Activated CD4-positive, alpha-beta memory T cell treated with anti-CD3 and anti-CD28 coated beads, Interleukin-2, amount 10 ng/mL, durations not matched to agents 7 days and 5 days (primary cell): ENCODE measurements at regions of chr10 and their contacts with region 1.

Region 1: GRCh38 chr10:102225646-102226541 is at the start of gene ELOVL3:
- DNase-seq: peak; percentile 90
- H3K4me3 Mint-ChIP-seq: peak within 1 kb of the TSS; percentile 63
- H3K27ac Mint-ChIP-seq: peak within 1 kb of the TSS; percentile 44
- H3K4me1 Mint-ChIP-seq: peaks cover 26% of the 10 kb centered on the region
- H3K27me3 Mint-ChIP-seq: peaks cover 67% of the 10 kb centered on the region
- total RNA-seq, gene ELOVL3: not detected

Region 2: GRCh38 chr10:102150970-102151773 is 74.7 kb before region 1 on chr10:
- CTCF ChIA-PET with region 1: no interaction called
- POLR2A ChIA-PET with region 1: no interaction called
- DNase-seq: no peak
- H3K4me3 Mint-ChIP-seq: peak overlapping the region; percentile 90
- H3K27ac Mint-ChIP-seq: peak overlapping the region; percentile 87
- H3K4me1 Mint-ChIP-seq: peaks cover 47% of the 10 kb centered on the region
- H3K27me3 Mint-ChIP-seq: no peaks in the 10 kb centered on the region

Region 3: DNA sequence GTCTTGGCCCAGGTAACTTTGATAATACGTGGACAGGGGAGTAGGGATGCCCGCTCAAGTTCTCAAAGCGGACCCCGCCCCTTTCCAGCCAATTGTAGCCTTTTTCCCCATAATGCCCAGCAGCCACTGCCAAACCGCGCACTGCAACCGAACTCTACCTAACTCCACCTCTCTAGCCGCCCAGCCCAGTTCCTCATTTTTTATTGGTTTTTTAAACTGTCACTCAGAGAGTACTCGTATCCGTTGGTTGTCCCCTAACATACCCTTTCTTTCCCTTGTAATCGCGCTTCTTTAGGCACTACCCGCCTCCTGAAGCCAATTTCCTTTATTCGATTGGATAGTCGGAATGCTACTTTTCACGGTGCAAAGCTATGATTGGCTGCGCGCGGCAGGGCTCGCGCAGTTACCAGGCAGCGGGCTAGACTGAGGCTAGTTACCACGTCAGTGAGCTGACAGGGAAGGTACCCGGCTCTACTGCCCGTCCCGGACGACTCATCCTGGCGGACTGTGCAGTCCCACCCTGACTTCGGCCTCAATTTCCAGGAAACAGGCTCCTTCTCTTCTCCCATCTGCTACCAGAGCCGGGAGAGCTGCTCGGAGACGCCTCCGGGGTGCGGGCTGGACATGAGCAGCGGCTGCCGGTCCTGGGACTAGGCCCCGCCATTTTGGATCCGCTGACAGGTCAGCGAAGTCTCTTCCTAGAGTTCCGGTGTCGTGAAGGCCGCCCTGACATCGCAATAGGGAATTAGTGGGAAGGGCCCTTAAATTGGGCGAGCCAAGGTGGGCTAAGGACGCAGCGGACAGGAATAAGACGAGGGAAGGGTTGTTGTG is 19.4 kb after region 1 on chr10 and contains the start of gene GBF1:
- CTCF ChIA-PET with region 1: interaction called, 105 read pairs
- POLR2A ChIA-PET with region 1: interaction called, 11 read pairs
- DNase-seq: peak; percentile 94
- H3K4me3 Mint-ChIP-seq: peak within 1 kb of the TSS; percentile 99
- H3K27ac Mint-ChIP-seq: peak within 1 kb of the TSS; percentile 89
- H3K4me1 Mint-ChIP-seq: peaks cover 57% of the 10 kb centered on the region
- H3K27me3 Mint-ChIP-seq: peaks cover 14% of the 10 kb centered on the region
- total RNA-seq, gene GBF1: 42.4 to 43.1 TPM

Region 4: GRCh38 chr10:102322914-102323313 is 97.0 kb after region 1 on chr10:
- CTCF ChIA-PET with region 1: interaction called, 15 read pairs
- POLR2A ChIA-PET with region 1: no interaction called
- DNase-seq: peak; percentile 78
- H3K4me3 Mint-ChIP-seq: no peak overlapping the region
- H3K27ac Mint-ChIP-seq: no peak overlapping the region
- H3K4me1 Mint-ChIP-seq: peaks cover 23% of the 10 kb centered on the region
- H3K27me3 Mint-ChIP-seq: no peaks in the 10 kb centered on the region

Region 5: DNA sequence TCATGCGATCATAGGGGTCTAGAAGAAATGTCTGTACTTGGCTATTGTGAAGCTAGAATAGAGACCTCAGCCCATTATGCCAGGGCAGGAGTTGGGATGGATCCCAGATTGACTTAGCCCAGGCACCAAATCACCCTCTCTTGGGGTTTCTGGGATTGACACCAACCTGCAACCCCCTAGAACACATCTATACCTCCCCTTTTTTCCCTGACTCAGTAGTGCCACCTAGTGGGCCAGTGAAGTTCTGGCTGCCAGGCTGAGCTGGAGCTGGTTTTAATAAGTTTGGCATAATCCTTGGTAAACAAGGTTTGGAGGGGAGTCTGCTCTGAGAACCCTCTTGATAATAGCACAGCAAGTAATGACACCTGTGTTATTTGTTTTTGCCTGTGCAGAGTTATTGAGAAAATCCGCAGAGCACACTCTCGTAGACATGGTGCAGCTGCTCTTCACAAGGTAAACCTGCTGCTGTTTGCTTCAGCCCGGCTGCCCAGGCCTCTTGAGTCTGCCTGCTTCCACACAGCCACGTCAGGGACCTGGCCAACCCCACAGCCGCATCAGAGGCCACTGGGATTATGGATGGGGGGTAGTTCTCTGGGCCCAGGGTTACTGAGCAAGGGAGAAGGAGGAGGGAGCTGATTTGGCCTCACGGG is 126.3 kb after region 1 on chr10:
- CTCF ChIA-PET with region 1: interaction called, 593 read pairs
- POLR2A ChIA-PET with region 1: interaction called, 39 read pairs
- DNase-seq: peak; percentile 73
- H3K4me3 Mint-ChIP-seq: no peak overlapping the region
- H3K27ac Mint-ChIP-seq: no peak overlapping the region
- H3K4me1 Mint-ChIP-seq: peaks cover 4% of the 10 kb centered on the region
- H3K27me3 Mint-ChIP-seq: no peaks in the 10 kb centered on the region

Region 6: GRCh38 chr10:102375250-102375649 is 149.4 kb after region 1 on chr10:
- CTCF ChIA-PET with region 1: interaction called, 13 read pairs
- POLR2A ChIA-PET with region 1: no interaction called
- DNase-seq: no peak
- H3K4me3 Mint-ChIP-seq: no peak overlapping the region
- H3K27ac Mint-ChIP-seq: no peak overlapping the region
- H3K4me1 Mint-ChIP-seq: no peaks in the 10 kb centered on the region
- H3K27me3 Mint-ChIP-seq: no peaks in the 10 kb centered on the region

Region 7: GRCh38 chr10:102420810-102421644 is 195.1 kb after region 1 on chr10 and contains the start of gene FBXL15:
- CTCF ChIA-PET with region 1: interaction called, 58 read pairs
- POLR2A ChIA-PET with region 1: interaction called, 12 read pairs
- DNase-seq: peak; percentile 97
- H3K4me3 Mint-ChIP-seq: peak within 1 kb of the TSS; percentile 87
- H3K27ac Mint-ChIP-seq: peak within 1 kb of the TSS; percentile 90
- H3K4me1 Mint-ChIP-seq: peaks cover 40% of the 10 kb centered on the region
- H3K27me3 Mint-ChIP-seq: peaks cover 18% of the 10 kb centered on the region
- total RNA-seq, gene FBXL15: 13.5 to 14.3 TPM